Activated CD8-positive, alpha-beta T cell treated with anti-CD3 and anti-CD28 coated beads, Interleukin-2, amount 10 ng/mL, durations not matched to agents 7 days and 5 days (primary cell): ENCODE measurements at regions of chr16 and their contacts with region 1.

Region 1: DNA sequence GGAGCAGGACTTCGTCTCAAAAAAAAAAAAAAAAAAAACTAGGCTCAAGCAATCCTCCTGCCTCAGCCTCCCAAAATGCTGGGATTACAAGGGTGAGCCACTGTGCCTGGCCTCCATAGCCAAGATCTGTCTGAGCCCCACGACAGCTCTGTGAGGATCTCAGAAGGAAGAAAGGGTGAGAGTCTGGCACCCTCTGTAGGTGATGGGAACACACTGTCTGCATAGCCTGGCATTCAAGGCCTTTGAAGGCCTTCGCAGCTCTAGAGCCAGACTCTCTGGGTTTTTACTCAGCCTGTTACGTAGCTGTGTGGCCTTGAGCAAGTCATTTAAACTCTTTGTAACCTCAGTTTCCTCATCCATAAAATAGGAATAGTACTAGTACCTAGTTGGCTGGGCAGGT is 6.3 kb upstream of the XPO6 start:
- DNase-seq: peak; percentile 79
- ATAC-seq: peak; percentile 100
- H3K4me3 Mint-ChIP-seq: no peak overlapping the region
- H3K27ac Mint-ChIP-seq: no peak overlapping the region
- H3K4me1 Mint-ChIP-seq: peaks cover 10% of the 10 kb centered on the region
- H3K27me3 Mint-ChIP-seq: no peaks in the 10 kb centered on the region

Region 2: DNA sequence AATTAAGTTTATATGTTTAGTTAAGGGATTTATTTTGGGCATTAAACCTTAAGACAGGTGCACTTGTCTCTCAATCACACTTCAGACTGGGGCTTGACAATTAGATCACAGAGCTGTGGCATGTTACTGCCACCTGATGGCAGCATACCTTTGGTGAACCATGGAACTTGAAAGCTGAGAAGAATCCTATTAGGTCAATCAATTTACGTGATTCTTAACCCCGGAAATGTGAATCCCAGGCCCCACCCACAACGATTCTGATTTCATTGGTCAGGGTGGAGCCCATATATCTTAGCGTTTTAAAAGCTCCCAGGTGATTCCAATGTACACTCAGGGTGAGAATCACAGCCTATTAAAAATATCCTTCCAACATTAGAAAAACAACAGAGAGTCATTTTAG is 245.6 kb before region 1 on chr16:
- CTCF ChIA-PET with region 1: interaction called, 25 read pairs
- POLR2A ChIA-PET with region 1: no interaction called
- DNase-seq: peak; percentile 79
- ATAC-seq: peak; percentile 93
- H3K4me3 Mint-ChIP-seq: no peak overlapping the region
- H3K27ac Mint-ChIP-seq: no peak overlapping the region
- H3K4me1 Mint-ChIP-seq: peaks cover 7% of the 10 kb centered on the region
- H3K27me3 Mint-ChIP-seq: peaks cover 26% of the 10 kb centered on the region

Region 3: DNA sequence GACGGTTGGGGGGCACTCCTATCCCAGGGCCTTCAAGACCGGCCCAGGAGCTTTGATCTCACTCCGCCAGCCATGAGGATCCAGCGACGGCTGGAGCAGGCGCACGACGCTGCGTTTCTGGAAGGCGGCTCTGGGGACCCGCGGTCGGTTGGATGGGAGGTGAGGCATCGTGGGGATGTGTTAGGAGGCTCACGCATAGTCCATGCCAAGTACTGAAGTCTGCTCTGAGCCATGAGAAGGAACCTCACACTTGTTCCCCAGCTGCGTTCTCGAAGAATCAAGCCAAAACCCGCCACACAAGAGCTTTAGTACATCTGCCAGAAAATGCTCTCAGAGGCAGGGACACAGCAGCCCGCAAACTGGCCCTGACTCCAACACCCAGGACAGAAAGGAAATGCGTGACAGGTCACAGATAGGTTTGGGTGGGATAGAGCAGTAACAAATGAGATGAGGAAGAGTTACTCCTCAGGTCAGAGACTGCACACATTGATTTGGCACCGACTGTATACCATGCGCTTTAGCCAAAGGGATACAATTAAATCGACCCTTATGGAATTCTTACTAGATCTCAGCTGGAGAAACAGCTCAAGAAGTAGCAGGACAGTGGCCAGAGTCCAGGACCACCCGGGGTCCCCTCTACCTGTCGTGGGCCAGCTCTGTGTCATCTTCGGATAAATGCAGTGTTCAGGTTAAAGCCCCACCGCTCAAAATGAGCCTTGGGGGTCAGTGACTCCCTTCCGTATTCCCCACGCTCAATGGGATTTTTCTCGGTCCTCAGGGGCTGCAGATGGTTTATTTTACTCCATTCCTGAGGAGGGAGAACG is 147.9 kb before region 1 on chr16:
- CTCF ChIA-PET with region 1: interaction called, 21 read pairs
- POLR2A ChIA-PET with region 1: no interaction called
- DNase-seq: no peak
- ATAC-seq: no peak
- H3K4me3 Mint-ChIP-seq: no peak overlapping the region
- H3K27ac Mint-ChIP-seq: no peak overlapping the region
- H3K4me1 Mint-ChIP-seq: no peaks in the 10 kb centered on the region
- H3K27me3 Mint-ChIP-seq: peaks cover 11% of the 10 kb centered on the region

Region 4: DNA sequence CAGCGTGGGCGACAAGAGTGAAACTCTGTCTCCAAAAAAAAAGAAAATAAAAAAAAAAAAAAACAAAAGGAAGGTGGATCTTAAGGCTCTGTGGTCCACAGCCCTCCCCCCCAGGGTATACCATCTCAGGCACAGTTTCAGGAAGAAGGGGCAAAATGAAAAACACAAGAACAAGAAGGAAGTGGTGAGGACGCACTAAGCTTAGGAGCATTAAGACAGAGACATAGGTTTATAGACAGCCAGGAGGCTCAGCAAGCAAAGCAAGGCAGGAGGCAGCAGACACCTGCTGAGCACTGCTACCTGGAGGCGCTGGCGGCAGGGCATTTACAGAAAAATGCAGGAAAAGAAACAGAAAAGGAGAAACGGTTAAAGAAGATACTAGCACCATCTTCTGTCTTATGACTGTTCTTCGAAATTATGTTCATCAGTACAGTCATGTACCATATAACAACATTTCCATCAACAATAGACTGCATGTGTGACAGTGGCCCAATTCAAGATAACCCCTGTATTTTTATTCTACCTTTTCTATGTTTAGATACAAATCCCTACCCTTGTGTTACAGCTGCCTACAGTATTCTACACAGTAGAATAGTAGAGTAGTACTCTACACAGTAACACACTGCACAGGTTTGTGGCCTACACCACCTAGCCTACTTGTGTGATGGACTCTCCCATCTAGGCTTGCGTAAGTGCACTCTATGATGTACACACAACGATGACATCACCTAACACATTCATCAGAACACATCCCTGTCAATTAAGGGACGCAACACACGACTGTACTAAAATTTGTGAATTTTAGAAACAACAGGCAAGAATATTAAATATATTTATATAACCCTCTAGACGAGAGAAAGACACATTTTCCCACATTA is 68.9 kb before region 1 on chr16:
- CTCF ChIA-PET with region 1: interaction called, 13 read pairs
- POLR2A ChIA-PET with region 1: no interaction called
- DNase-seq: peak; percentile 37
- ATAC-seq: peak; percentile 83
- H3K4me3 Mint-ChIP-seq: peak overlapping the region; percentile 12
- H3K27ac Mint-ChIP-seq: peak overlapping the region; percentile 89
- H3K4me1 Mint-ChIP-seq: peaks cover 66% of the 10 kb centered on the region
- H3K27me3 Mint-ChIP-seq: no peaks in the 10 kb centered on the region

Region 5: GRCh38 chr16:28181515-28181914 is 36.6 kb before region 1 on chr16:
- CTCF ChIA-PET with region 1: interaction called, 12 read pairs
- POLR2A ChIA-PET with region 1: no interaction called
- DNase-seq: no peak
- ATAC-seq: no peak
- H3K4me3 Mint-ChIP-seq: no peak overlapping the region
- H3K27ac Mint-ChIP-seq: peak overlapping the region; percentile 74
- H3K4me1 Mint-ChIP-seq: peaks cover 72% of the 10 kb centered on the region
- H3K27me3 Mint-ChIP-seq: no peaks in the 10 kb centered on the region

Region 6: GRCh38 chr16:28193530-28194423 is 24.3 kb before region 1 on chr16:
- CTCF ChIA-PET with region 1: interaction called, 10 read pairs
- POLR2A ChIA-PET with region 1: interaction called, 3 read pairs
- DNase-seq: no peak
- ATAC-seq: peak; percentile 52
- H3K4me3 Mint-ChIP-seq: peak overlapping the region; percentile 78
- H3K27ac Mint-ChIP-seq: peak overlapping the region; percentile 93
- H3K4me1 Mint-ChIP-seq: peaks cover 79% of the 10 kb centered on the region
- H3K27me3 Mint-ChIP-seq: no peaks in the 10 kb centered on the region

Region 7: GRCh38 chr16:28202147-28202746 is 15.9 kb before region 1 on chr16:
- CTCF ChIA-PET with region 1: interaction called, 29 read pairs
- POLR2A ChIA-PET with region 1: no interaction called
- DNase-seq: peak; percentile 42
- ATAC-seq: peak; percentile 29
- H3K4me3 Mint-ChIP-seq: no peak overlapping the region
- H3K27ac Mint-ChIP-seq: peak overlapping the region; percentile 56
- H3K4me1 Mint-ChIP-seq: peaks cover 29% of the 10 kb centered on the region
- H3K27me3 Mint-ChIP-seq: no peaks in the 10 kb centered on the region